ENCODE measurements at regions of chr14 and their contacts with region 1.

Region 1: DNA sequence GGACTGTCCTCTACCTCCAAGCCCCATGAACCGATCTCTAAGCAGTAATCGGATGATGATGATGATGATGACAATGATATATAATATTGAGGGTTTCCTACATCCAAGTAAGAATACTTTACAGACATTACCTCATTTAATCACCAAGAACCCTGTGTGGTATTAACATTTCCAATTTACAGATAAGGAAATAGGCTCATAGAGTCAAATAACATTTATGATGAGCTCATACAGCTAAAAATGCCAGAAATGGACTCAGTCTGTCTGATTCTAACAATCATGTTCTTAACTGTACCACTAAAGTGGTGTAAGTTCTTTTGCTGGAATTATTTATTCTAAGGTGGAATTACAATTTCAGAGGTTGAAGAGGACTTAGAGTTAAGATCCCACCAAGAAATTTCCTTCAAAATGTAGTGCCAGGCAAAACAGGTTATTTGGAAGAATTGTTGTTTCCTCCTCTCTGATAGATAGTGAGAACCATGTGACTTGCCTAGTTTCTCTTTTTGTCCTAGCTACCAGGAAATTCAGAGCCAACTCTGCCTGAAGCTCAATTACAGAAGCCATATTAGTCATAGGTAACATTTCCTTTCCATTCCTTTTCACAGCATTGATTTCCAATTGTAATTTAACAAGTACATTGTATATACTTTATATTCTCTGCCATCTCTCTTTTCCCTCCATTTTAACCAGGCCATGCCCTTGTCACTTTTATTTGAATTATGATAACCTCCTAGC is 23.8 kb upstream of the CCDC175 start:
- DNase-seq: no peak
- H3K4me3 ChIP-seq: no peak overlapping the region
- H3K27ac ChIP-seq: no peak overlapping the region
- H3K4me1 ChIP-seq: no peaks in the 10 kb centered on the region
- H3K27me3 ChIP-seq: no peaks in the 10 kb centered on the region
- CTCF ChIP-seq: no peak

Region 2: DNA sequence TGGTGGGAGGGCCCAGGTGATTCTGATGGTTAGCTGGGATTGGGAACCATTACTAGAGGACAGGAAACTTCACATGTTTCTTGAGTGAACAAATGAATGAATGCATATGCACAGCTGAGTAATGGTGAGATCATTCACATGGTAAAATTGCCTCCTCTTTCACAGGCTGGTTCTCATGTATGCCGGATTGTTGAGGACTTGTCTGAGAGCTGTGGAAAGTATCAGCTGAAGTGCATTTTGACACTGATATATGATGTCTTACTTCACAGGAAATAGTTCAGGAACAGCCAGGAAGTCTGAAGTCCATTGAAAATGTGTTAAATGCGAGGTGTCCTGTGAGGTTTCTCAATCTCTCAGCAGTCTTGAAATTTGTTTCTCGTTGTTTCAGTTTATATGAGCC is 1040.2 kb before region 1 on chr14:
- CTCF ChIA-PET with region 1: no interaction called
- POLR2A ChIA-PET with region 1: interaction called, 11 read pairs
- intact Hi-C with region 1: no loop called
- DNase-seq: peak; percentile 89
- H3K4me3 ChIP-seq: no peak overlapping the region
- H3K27ac ChIP-seq: peak overlapping the region; percentile 45
- H3K4me1 ChIP-seq: peaks cover 13% of the 10 kb centered on the region
- H3K27me3 ChIP-seq: no peaks in the 10 kb centered on the region
- CTCF ChIP-seq: no peak

Region 3: DNA sequence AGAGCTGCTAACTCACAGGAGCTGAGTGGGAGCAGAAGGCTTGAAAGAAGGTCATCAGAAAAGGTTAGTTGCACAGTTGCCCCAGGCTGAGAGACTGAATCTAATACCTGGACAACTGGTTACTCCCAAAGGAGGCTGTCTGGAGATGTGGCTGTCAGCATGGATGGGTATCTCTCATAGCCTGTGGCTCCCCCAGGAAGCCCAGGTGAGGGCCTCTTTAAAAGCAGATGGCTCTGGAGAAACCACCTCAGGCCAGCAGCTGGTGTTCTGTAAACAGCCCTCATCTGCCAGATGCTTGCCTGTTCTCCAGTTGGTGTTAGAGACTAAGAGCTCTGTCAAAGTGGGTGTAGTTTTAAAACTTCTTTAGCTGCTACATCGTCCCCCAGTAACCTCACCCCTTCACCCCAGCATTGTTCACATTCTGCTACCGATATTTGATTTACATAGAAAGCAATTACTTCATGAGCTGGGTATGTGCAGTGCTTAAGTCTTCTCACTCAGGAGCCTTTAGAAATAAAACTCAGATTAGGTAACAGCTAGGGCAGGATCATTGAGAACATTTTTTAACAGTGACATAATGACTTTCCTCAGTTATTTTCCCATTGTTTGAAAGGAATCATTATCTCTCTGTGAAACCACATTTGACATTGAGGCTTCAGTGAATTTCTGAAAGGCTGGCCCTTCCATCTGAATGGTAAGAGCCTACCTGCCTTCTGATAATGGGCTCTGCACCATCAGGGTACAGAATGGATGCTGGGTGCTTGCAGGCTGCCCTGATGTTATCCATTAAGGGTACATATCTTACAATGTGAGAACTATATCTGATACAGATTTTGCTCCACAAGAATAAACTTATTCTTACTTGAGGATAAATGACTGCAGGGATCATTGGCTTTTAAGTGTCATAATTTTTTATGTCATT is 936.6 kb before region 1 on chr14:
- CTCF ChIA-PET with region 1: no interaction called
- POLR2A ChIA-PET with region 1: no interaction called
- intact Hi-C with region 1: no loop called
- DNase-seq: peak; percentile 29
- H3K4me3 ChIP-seq: no peak overlapping the region
- H3K27ac ChIP-seq: no peak overlapping the region
- H3K4me1 ChIP-seq: no peaks in the 10 kb centered on the region
- H3K27me3 ChIP-seq: no peaks in the 10 kb centered on the region
- CTCF ChIP-seq: no peak

Region 4: GRCh38 chr14:59754256-59754655 is 153.9 kb after region 1 on chr14:
- CTCF ChIA-PET with region 1: no interaction called
- POLR2A ChIA-PET with region 1: no interaction called
- intact Hi-C with region 1: no loop called
- DNase-seq: no peak
- H3K4me3 ChIP-seq: no peak overlapping the region
- H3K27ac ChIP-seq: no peak overlapping the region
- H3K4me1 ChIP-seq: peaks cover 12% of the 10 kb centered on the region
- H3K27me3 ChIP-seq: no peaks in the 10 kb centered on the region
- CTCF ChIP-seq: no peak

Region 5: DNA sequence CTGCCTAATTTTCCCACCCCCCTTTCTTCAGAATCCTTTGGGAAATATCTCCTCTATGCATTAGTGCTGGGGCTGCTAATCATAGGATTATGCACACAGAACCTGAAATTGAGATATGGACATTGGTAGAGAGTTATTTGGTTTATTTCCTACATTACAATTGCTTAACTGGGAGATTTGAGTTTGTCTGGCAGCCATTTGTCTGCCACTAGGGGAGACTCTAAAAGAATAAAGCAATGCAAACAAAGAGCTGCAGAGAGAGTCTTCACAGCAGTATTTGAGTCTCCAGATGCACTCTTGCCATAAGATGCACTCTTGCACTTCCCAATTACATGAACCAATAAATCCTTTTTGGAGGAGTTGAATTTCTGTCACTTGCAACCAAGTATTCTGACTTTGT is 479.3 kb after region 1 on chr14:
- CTCF ChIA-PET with region 1: no interaction called
- POLR2A ChIA-PET with region 1: no interaction called
- intact Hi-C with region 1: no loop called
- DNase-seq: peak; percentile 4
- H3K4me3 ChIP-seq: no peak overlapping the region
- H3K27ac ChIP-seq: no peak overlapping the region
- H3K4me1 ChIP-seq: no peaks in the 10 kb centered on the region
- H3K27me3 ChIP-seq: no peaks in the 10 kb centered on the region
- CTCF ChIP-seq: peak; percentile 35; the same call in 1 of the 2 replicates

Measured in A673 (cell line).